ENCODE measurements at regions of chr1 and their contacts with region 1.

Region 1: GRCh38 chr1:15323351-15323988 is 76.4 kb downstream of the FHAD1 start:
- DNase-seq: peak; percentile 85

Region 2: GRCh38 chr1:15444468-15445389 is 121.3 kb after region 1 on chr1:
- in situ Hi-C with region 1: loop called (anchors 10 kb)
- DNase-seq: no peak

Measured in G401 (cell line).